Activated B cell treated with CpG ODN at 0.5 μM for 24 hours (primary cell): ENCODE measurements at regions of chr19 and their contacts with region 1.

Region 1: DNA sequence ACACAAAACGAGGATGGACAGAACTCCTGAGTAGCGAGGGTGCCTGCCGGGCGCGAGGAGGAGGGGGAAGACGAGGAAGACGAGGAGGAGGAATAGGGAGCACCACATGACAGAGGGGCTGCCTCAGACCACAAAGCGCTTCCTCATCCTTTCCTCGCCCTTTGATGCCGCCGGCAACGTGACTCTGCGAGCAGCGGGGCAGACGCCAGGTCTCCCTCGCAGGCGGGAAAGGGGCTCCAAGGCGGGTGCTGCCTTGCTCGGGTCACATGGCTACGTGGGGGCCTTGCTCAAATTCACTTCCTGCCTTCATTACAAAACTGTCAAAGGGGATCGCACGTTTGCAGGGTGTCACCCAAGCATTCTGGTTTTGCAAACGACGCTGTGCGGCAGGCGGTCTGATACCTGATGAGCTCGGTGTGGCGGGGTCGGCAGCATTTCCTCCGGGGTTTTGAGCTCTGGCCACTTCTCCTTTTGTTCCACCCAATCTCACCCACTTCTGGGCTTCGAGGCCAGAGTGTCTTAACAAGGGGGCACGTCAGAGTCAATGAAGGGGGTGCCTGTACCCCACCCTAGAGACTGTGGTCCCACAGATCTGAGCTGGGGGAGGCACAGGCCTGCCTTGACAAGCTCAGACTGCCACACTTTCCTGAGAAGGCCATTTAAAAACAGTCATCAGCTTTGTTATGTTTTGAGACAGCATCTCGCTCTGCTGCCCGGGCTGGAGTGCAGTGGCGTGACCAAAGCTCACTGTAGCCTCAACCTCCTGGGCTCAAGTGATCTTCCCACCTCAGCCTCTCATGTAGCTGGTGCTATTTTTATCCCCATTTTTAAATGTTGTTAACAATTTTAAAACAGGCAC is 14.9 kb downstream of the MAP2K2 start:
- DNase-seq: peak; percentile 70
- ATAC-seq: peak; percentile 87
- H3K4me3 Mint-ChIP-seq: peak overlapping the region; percentile 76
- H3K27ac Mint-ChIP-seq: peak overlapping the region; percentile 99
- H3K4me1 Mint-ChIP-seq: peaks cover 64% of the 10 kb centered on the region
- H3K27me3 Mint-ChIP-seq: no peaks in the 10 kb centered on the region
- CTCF ChIP-seq: no peak

Region 2: GRCh38 chr19:4007021-4007835 is 101.8 kb before region 1 on chr19 and contains the start of gene PIAS4:
- CTCF ChIA-PET with region 1: no interaction called
- POLR2A ChIA-PET with region 1: interaction called, 8 read pairs
- intact Hi-C with region 1: loop called (anchors 5 kb)
- DNase-seq: peak; percentile 90
- ATAC-seq: peak; percentile 87
- H3K4me3 Mint-ChIP-seq: peak within 1 kb of the TSS; percentile 84
- H3K27ac Mint-ChIP-seq: peak within 1 kb of the TSS; percentile 74
- H3K4me1 Mint-ChIP-seq: peaks cover 31% of the 10 kb centered on the region
- H3K27me3 Mint-ChIP-seq: no peaks in the 10 kb centered on the region
- CTCF ChIP-seq: no peak
- total RNA-seq, gene PIAS4: 36.4 and 37.2 TPM in 2 replicates

Region 3: DNA sequence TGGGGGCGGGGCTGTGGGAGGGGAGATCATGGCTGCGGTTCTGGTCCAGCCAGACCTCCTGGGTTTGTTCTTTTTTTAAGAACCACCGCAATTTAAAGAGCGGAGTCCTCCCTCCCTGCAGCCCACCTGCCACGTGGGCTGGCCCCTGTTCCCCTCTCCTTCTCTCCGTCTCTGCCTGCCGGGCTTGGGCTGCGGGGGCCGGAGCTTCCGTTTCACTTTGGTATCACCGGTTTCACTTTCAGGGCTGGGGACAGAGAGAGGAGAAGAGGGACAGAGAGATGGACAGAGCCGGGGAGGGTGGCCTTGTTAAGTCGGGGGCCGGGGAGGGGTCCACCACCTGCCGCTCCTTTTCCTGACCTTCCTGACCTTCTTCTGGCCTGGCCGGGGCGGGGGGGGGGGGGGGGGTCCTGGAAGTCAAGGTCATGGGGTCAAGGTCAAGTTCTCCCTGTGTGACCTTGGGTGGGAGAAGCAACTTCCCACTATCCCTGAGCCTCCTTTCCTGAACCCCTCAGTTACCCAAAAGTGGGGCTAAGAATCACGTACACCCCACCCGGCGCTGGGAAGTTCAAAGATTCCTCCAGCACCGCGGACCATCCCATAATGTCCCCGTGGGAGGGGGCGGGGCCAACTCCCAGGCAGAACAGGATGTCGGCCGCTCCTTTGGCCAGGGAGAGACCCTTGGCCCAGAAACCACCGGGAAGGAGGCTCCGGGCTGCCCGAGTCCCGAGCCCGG is 30.9 kb before region 1 on chr19:
- CTCF ChIA-PET with region 1: no interaction called
- POLR2A ChIA-PET with region 1: interaction called, 25 read pairs
- intact Hi-C with region 1: no loop called
- DNase-seq: peak; percentile 52
- ATAC-seq: peak; percentile 88
- H3K4me3 Mint-ChIP-seq: peak overlapping the region; percentile 88
- H3K27ac Mint-ChIP-seq: peak overlapping the region; percentile 90
- H3K4me1 Mint-ChIP-seq: peaks cover 19% of the 10 kb centered on the region
- H3K27me3 Mint-ChIP-seq: no peaks in the 10 kb centered on the region
- CTCF ChIP-seq: no peak

Region 4: DNA sequence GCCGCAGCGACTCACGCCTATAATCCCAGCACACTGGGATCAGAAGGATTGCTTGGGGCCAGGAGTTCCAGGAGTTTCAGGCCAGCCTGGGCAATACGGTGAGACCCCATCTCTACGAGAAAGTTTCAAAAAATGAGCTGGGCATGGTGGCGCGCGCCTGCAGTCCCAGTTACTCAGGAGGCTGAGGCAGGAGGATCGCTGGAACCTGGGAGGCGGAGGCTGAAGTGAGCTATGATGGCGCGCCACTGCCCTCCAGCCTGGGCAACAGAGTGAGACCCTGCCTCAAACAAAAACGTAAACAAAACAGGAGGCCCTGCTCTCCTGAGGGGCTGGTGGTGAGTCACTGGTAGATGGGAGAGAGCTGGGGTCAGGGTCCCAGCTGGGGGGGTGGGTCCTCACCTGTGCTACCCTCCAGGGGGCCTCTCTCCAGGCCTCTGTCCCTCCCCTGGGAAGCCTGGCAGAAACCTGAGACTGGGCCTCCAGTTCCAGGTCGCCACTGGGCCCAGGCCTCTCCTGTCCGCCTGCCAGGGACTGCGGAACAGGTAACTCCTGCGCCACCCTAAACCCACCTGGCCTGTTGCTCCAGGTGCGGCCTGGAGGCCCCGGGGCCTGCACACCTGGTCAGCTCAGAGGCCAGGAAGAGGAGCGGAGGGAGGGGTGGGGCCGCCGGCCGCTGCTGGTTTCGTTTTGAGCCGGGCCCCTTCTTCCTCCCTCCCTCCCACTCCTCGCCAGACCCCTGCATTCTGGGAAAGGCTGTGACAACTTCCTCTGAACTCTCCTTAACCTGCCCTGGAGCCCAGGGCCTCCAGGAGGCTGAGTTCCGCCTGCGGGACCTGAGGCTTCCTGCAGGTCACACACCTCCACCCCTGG is 25.1 kb before region 1 on chr19:
- CTCF ChIA-PET with region 1: no interaction called
- POLR2A ChIA-PET with region 1: interaction called, 25 read pairs
- intact Hi-C with region 1: no loop called
- DNase-seq: peak; percentile 27
- ATAC-seq: peak; percentile 53
- H3K4me3 Mint-ChIP-seq: peak overlapping the region; percentile 70
- H3K27ac Mint-ChIP-seq: peak overlapping the region; percentile 90
- H3K4me1 Mint-ChIP-seq: peaks cover 19% of the 10 kb centered on the region
- H3K27me3 Mint-ChIP-seq: no peaks in the 10 kb centered on the region
- CTCF ChIP-seq: no peak

Region 5: GRCh38 chr19:4089400-4089908 is 19.5 kb before region 1 on chr19:
- CTCF ChIA-PET with region 1: interaction called, 3 read pairs
- POLR2A ChIA-PET with region 1: interaction called, 12 read pairs
- intact Hi-C with region 1: no loop called
- DNase-seq: no peak
- ATAC-seq: peak; percentile 61
- H3K4me3 Mint-ChIP-seq: peak overlapping the region; percentile 50
- H3K27ac Mint-ChIP-seq: peak overlapping the region; percentile 71
- H3K4me1 Mint-ChIP-seq: peaks cover 14% of the 10 kb centered on the region
- H3K27me3 Mint-ChIP-seq: no peaks in the 10 kb centered on the region
- CTCF ChIP-seq: no peak

Region 6: DNA sequence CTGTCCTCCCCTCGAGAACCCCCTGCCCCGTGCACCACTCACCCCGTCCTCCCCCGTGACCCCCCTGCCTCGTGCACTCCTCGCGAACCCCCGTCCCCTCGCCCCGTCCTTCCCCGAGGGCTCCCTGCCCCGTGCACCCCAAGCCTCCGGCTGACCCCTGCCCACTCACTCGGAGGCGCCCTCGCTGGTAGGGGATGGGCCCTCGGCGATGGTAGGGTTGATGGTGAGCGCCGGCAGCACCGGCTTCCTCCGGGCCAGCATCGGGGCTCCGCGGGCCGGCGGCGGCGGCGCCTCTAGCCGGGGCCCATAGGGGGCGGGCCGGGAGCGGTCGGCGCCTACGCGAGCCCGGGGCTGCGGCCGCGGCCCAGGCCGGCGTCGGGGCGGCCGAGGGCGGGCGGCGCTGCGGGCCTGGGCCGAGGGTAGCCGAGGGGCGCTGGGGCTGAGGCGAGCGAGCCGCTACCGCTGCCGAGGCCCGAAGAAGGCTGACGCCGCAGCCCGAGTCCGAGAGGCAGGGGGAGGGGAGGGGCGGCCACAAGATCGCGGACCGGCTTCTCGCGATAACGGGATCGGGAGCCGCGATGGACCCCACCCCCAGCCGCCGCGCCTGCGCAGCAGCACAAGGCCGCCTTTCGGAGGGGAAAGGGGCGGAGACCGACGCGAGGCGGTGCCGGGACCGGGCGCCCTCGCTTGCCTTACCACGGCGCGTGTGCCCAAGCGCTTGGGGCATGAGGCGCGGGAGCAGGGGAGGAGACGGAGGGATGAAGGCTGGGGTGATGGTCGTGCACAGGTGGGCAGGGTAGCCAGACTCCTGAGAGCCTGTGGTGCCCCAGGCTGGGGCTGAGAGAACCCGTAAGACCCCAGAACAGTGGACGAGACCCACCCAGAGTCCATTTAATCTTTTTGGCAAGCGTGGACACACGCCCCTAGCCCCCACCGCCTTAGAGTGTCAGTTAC is 14.9 kb after region 1 on chr19 and contains the start of gene MAP2K2:
- CTCF ChIA-PET with region 1: interaction called, 3 read pairs
- POLR2A ChIA-PET with region 1: interaction called, 6 read pairs
- intact Hi-C with region 1: loop called (anchors 1 kb)
- DNase-seq: peak; percentile 97
- ATAC-seq: peak; percentile 96
- H3K4me3 Mint-ChIP-seq: peak within 1 kb of the TSS; percentile 85
- H3K27ac Mint-ChIP-seq: peak within 1 kb of the TSS; percentile 78
- H3K4me1 Mint-ChIP-seq: peaks cover 24% of the 10 kb centered on the region
- H3K27me3 Mint-ChIP-seq: no peaks in the 10 kb centered on the region
- CTCF ChIP-seq: no peak
- total RNA-seq, gene MAP2K2: 126 TPM in 2 replicates

Region 7: DNA sequence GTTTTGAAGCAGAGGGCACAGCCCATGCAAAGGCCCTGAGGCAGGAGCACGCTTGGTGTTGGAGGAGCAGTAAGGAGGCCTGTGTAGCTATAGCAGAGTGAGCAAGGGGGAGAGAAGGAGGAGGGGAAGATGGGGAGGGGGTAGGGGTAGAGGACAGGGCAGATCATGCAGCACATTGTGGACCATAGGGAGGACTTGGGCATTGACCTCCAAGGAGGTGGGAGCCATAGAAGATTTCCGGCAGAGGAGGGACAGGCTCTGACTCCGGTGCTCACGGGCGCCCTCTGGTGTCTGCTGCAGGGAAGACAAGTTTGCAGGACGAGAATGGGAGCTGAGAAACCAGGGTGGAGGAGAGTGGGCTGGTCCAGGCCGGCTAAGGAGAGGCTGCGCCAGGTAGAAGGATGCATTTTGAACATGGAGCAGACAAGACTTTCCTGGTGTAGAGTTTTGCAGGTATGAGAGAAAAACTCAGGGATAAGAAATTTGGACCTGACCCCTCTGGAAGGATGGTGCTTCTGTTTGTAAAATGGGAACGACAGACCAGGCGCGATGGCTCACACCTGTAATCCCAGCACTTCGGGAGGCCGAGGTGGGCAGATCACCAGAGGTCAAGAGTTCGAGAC is 30.7 kb after region 1 on chr19:
- CTCF ChIA-PET with region 1: interaction called, 15 read pairs
- POLR2A ChIA-PET with region 1: interaction called, 6 read pairs
- intact Hi-C with region 1: loop called (anchors 1 kb)
- DNase-seq: peak; percentile 84
- ATAC-seq: peak; percentile 95
- H3K4me3 Mint-ChIP-seq: no peak overlapping the region
- H3K27ac Mint-ChIP-seq: peak overlapping the region; percentile 10
- H3K4me1 Mint-ChIP-seq: peaks cover 14% of the 10 kb centered on the region
- H3K27me3 Mint-ChIP-seq: peaks cover 5% of the 10 kb centered on the region
- CTCF ChIP-seq: peak; percentile 71

Region 8: GRCh38 chr19:4164262-4164661 is 55.3 kb after region 1 on chr19:
- CTCF ChIA-PET with region 1: no interaction called
- POLR2A ChIA-PET with region 1: no interaction called
- intact Hi-C with region 1: no loop called
- DNase-seq: no peak
- ATAC-seq: no peak
- H3K4me3 Mint-ChIP-seq: no peak overlapping the region
- H3K27ac Mint-ChIP-seq: no peak overlapping the region
- H3K4me1 Mint-ChIP-seq: no peaks in the 10 kb centered on the region
- H3K27me3 Mint-ChIP-seq: peaks cover 10% of the 10 kb centered on the region
- CTCF ChIP-seq: no peak